Mammary epithelial cell (primary cell): ENCODE measurements at regions of chr1 and their contacts with region 1.

Region 1: GRCh38 chr1:245575710-245576109 is 420.9 kb downstream of the KIF26B start:
- DNase-seq: no peak
- H3K4me3 ChIP-seq: no peak overlapping the region
- H3K27ac ChIP-seq: no peak overlapping the region
- H3K4me1 ChIP-seq: no peaks in the 10 kb centered on the region
- H3K27me3 ChIP-seq: no peaks in the 10 kb centered on the region
- CTCF ChIP-seq: no peak

Region 2: GRCh38 chr1:245537992-245538391 is 37.7 kb before region 1 on chr1:
- CTCF ChIA-PET with region 1: no interaction called
- dilution Hi-C with region 1: loop called (anchors 5 kb)
- in situ Hi-C with region 1: no loop called
- intact Hi-C with region 1: no loop called
- DNase-seq: peak; percentile 5
- H3K4me3 ChIP-seq: no peak overlapping the region
- H3K27ac ChIP-seq: no peak overlapping the region
- H3K4me1 ChIP-seq: no peaks in the 10 kb centered on the region
- H3K27me3 ChIP-seq: no peaks in the 10 kb centered on the region
- CTCF ChIP-seq: no peak